Activated B cell treated with CpG ODN at 0.5 μM for 24 hours (primary cell): ENCODE measurements at regions of chr6 and their contacts with region 1.

Region 1: GRCh38 chr6:32853541-32854375 is at the starts of genes PSMB9 and TAP1:
- DNase-seq: peak; percentile 91
- ATAC-seq: peak; percentile 80
- H3K4me3 Mint-ChIP-seq: peak within 1 kb of the TSS; percentile 99
- H3K27ac Mint-ChIP-seq: peak within 1 kb of the TSS; percentile 98
- H3K4me1 Mint-ChIP-seq: peaks cover 77% of the 10 kb centered on the region
- H3K27me3 Mint-ChIP-seq: no peaks in the 10 kb centered on the region
- CTCF ChIP-seq: peak; percentile 20
- total RNA-seq, gene PSMB9: 198 and 223 TPM in 2 replicates
- total RNA-seq, gene TAP1: 148 and 151 TPM in 2 replicates

Region 2: DNA sequence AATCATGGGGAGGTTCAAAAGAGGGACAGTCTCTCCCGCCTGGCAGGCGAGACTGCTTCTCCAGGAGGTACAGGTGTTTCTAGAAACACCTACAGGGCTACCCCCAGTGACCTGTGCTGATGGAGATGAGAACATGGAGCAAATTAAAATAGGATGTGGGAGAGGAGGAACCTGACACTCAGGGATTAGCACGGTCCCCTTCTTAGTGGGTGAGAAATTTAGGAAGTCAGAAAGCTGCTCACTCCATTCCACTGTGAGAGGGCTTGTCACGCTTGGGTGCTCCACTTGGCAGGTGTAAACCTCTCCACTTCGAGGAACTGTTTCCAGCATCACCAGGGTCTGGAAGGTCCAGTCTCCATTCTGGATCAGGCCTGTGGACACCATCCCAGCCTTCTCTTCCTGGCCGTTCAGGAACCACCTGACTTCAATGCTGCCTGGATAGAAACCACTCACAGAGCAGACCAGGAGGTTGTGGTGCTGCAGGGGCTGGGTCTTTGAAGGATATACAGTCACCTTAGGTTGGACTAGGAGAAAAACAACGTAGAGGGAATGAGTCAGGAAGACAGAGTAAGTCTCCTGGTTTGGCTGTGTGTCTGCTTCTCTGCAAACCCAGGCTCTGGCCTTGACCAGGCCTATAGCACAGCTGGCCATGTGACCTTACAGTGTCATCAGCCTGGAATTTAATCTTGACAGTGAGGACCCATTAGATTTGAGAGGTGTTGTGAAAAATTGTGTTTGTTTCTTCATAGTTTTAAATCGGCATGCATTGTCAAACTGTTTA is 272.3 kb before region 1 on chr6:
- CTCF ChIA-PET with region 1: no interaction called
- POLR2A ChIA-PET with region 1: no interaction called
- intact Hi-C with region 1: no loop called
- DNase-seq: no peak
- ATAC-seq: peak; percentile 22
- H3K4me3 Mint-ChIP-seq: no peak overlapping the region
- H3K27ac Mint-ChIP-seq: peak overlapping the region; percentile 83
- H3K4me1 Mint-ChIP-seq: peaks cover 48% of the 10 kb centered on the region
- H3K27me3 Mint-ChIP-seq: no peaks in the 10 kb centered on the region
- CTCF ChIP-seq: no peak

Region 3: DNA sequence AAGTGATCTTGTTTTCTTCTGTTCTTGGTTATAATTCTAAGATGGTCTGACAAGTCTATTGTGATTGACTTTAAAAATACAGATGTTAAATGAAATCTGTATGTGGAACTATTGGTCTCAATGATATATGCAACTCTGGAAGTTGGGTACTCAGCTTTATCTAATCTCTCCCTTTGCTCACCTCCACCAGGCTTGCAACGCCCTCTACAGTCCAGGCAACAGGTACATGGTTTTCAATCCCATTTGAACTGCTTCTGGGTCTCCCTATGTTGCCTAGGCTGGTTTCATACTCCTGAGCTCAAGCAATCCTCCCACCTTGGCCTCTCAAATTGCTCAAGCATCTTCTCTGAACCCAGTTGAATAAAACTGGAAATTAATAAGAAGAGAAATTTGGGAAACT is 161.7 kb before region 1 on chr6:
- CTCF ChIA-PET with region 1: no interaction called
- POLR2A ChIA-PET with region 1: interaction called, 13 read pairs
- intact Hi-C with region 1: no loop called
- DNase-seq: no peak
- ATAC-seq: peak; percentile 49
- H3K4me3 Mint-ChIP-seq: peak overlapping the region; percentile 3
- H3K27ac Mint-ChIP-seq: peak overlapping the region; percentile 85
- H3K4me1 Mint-ChIP-seq: peaks cover 54% of the 10 kb centered on the region
- H3K27me3 Mint-ChIP-seq: no peaks in the 10 kb centered on the region
- CTCF ChIP-seq: no peak

Region 4: DNA sequence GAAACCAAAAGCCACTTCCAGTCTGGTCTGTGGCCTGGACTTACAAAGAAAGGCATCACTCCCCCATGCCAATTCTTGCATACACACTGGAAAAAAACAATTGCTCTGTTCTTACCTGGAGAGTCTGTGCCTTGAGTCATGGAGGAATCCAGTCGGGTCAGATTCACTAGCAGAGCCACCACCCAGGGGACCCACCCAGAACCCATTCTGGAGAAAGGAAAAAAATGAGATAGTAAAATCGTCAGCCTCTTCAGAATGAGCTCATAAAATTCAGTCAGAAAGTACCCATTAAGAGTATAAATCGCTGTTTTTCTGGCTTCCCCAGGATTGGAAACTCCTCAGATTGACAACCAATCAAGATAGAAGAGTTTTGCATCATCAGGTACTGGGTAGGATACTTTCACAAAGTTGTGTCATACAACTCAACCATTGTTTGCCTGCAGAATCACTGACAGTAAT is 37.0 kb before region 1 on chr6 and contains the start of gene HLA-DOB:
- CTCF ChIA-PET with region 1: interaction called, 4 read pairs
- POLR2A ChIA-PET with region 1: interaction called, 30 read pairs
- intact Hi-C with region 1: loop called (anchors 1 kb)
- DNase-seq: no peak
- ATAC-seq: peak; percentile 73
- H3K4me3 Mint-ChIP-seq: peak within 1 kb of the TSS; percentile 99
- H3K27ac Mint-ChIP-seq: peak within 1 kb of the TSS; percentile 99
- H3K4me1 Mint-ChIP-seq: peaks cover 96% of the 10 kb centered on the region
- H3K27me3 Mint-ChIP-seq: no peaks in the 10 kb centered on the region
- CTCF ChIP-seq: no peak
- total RNA-seq, gene HLA-DOB: 95.6 and 101 TPM in 2 replicates

Region 5: GRCh38 chr6:32825966-32826365 is 27.8 kb before region 1 on chr6:
- CTCF ChIA-PET with region 1: interaction called, 8 read pairs
- POLR2A ChIA-PET with region 1: interaction called, 11 read pairs
- intact Hi-C with region 1: no loop called
- DNase-seq: no peak
- ATAC-seq: no peak
- H3K4me3 Mint-ChIP-seq: no peak overlapping the region
- H3K27ac Mint-ChIP-seq: no peak overlapping the region
- H3K4me1 Mint-ChIP-seq: peaks cover 17% of the 10 kb centered on the region
- H3K27me3 Mint-ChIP-seq: no peaks in the 10 kb centered on the region
- CTCF ChIP-seq: no peak

Region 6: DNA sequence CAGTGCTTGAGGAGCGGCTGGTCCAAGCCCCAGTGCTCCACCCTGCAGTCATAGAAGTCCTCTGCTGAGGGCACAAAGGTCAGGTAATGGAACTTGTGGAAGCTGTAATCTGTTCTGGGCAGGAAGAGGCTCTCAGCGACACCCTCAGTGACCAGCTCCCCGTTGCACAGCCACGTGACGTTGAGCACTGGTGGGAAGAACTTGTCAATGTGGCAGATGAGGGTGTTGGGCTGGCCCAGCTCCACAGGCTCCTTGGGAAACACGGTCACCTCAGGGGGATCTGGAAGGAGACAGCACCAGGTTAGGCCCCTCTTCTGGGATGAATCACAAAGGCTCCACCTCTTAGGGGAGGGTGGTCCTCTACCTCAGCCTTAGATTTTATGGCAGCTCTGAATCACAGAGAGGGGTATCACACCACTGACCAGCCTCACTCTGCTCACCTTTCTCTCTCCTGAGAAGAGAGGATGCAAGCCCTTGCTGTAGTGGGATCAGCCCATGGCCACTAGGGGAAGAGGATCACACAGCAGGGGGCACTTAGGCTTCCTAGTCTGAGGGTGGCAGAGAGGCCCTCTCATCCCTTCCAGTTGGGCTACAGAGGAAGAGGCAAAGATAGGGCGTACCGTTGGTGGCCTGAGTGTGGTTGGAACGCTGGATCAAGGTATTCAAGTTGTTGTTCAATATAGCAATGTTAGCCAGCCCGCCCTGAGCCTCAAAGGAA is 215.4 kb after region 1 on chr6:
- CTCF ChIA-PET with region 1: no interaction called
- POLR2A ChIA-PET with region 1: no interaction called
- intact Hi-C with region 1: no loop called
- DNase-seq: no peak
- ATAC-seq: no peak
- H3K4me3 Mint-ChIP-seq: peak overlapping the region; percentile 97
- H3K27ac Mint-ChIP-seq: peak overlapping the region; percentile 99
- H3K4me1 Mint-ChIP-seq: peaks cover 75% of the 10 kb centered on the region
- H3K27me3 Mint-ChIP-seq: no peaks in the 10 kb centered on the region
- CTCF ChIP-seq: no peak